Activated naive CD4-positive, alpha-beta T cell treated with anti-CD3 and anti-CD28 coated beads for 36 hours (primary cell): ENCODE measurements at regions of chr11 and their contacts with region 1.

Region 1: GRCh38 chr11:104918113-104918824 is 20.0 kb upstream of the CASP12 start:
- DNase-seq: no peak
- H3K4me3 Mint-ChIP-seq: peak overlapping the region; percentile 59
- H3K27ac Mint-ChIP-seq: peak overlapping the region; percentile 78
- H3K4me1 Mint-ChIP-seq: peaks cover 38% of the 10 kb centered on the region
- H3K27me3 Mint-ChIP-seq: no peaks in the 10 kb centered on the region

Region 2: DNA sequence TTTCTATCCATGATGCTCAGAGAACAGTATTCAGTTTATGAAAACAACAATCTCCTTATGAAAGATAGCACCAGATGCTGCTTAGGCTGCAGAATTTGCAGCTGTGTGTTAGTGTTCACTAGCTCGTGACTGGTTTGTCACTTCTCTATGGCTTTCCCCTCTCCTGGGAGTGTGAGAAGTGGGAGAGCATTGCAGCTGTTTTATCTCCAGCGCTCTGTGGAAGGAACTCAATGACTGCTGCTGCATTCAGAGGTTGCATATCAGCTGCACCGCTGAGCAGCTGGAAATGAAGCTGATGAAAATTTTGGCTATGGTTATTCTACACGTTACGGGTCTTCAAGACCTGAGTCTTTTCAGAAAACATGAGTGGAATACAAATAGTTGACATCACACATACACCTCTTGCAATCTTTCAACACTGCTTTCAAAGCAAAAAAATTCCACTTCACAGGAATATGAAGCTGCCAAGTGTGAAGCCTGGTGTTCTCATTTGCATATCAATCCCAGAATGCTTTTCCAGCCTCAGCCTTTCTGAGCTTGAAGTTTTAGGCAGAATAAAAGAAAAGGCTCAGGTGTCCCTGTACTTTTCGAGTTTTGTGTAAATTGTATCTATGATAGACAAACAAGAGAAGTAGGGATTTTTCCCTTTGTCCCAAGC is 1031.1 kb before region 1 on chr11:
- CTCF ChIA-PET with region 1: no interaction called
- intact Hi-C with region 1: no loop called
- DNase-seq: no peak
- H3K4me3 Mint-ChIP-seq: no peak overlapping the region
- H3K27ac Mint-ChIP-seq: no peak overlapping the region
- H3K4me1 Mint-ChIP-seq: no peaks in the 10 kb centered on the region
- H3K27me3 Mint-ChIP-seq: no peaks in the 10 kb centered on the region

Region 3: DNA sequence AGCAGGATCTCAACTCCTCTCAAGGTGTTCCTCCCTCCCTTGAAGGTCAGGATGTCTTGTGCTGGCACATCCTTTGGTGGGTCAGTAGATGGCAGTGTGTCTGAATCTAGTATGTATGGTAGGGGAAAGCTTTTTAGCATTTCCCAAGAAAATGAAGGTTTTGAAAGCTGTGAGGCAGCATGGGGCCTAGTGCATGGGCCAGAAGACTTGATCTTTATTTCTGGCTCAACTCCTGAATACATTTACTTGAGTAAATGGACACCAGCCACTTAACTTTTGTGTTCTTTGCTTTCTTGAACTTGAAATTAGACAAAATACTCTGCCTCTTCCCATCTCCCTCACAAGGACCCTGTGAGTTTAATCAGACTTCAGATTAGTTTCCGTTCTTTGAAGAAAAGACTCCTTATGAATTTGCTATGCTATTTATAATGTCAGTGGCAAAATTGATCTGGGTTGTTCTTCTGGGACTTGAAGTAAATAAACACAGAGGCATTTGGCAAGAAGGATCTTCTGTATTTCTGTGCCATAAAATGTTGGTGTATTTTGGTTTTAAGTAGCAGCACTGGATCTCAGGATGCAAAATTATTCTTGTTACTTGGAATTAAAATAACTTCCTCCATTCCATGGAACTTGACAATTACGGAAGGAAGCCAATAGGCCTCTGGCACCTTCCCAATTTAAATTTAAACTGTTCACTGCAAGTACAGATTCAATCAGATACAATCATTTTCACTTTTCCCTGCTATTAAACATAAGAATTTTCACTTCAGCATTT is 308.8 kb before region 1 on chr11:
- CTCF ChIA-PET with region 1: no interaction called
- intact Hi-C with region 1: loop called (anchors 2 kb)
- DNase-seq: peak; percentile 35
- H3K4me3 Mint-ChIP-seq: no peak overlapping the region
- H3K27ac Mint-ChIP-seq: no peak overlapping the region
- H3K4me1 Mint-ChIP-seq: peaks cover 13% of the 10 kb centered on the region
- H3K27me3 Mint-ChIP-seq: no peaks in the 10 kb centered on the region

Region 4: DNA sequence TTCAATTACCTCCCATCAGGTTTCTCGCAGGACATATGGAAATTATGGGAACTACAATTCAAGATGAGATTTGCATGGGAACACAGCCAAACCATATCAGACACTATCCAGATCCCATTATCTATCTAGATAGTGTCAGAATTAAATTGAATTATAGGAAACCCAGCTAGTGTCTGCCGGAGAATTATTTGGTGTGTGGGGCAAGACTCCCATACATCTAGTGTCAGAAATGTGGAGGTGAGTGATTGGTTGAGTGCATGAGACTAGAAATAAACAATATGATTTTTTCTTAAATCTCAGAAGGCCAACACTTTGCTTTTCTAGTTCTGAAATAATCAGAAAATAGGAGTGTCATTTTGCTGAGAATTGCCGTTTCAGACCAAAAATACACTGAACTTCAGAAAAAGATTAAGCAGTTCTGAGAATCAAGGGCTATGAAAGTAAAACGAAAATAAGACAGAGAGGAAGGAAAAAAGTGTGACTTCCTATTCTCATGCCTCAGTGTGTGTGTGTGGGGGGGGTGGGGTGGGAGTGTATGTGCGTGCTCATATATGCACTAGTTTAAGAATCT is 41.3 kb before region 1 on chr11:
- CTCF ChIA-PET with region 1: interaction called, 4 read pairs
- intact Hi-C with region 1: loop called (anchors 1 kb)
- DNase-seq: no peak
- H3K4me3 Mint-ChIP-seq: peak overlapping the region; percentile 22
- H3K27ac Mint-ChIP-seq: peak overlapping the region; percentile 59
- H3K4me1 Mint-ChIP-seq: peaks cover 32% of the 10 kb centered on the region
- H3K27me3 Mint-ChIP-seq: no peaks in the 10 kb centered on the region

Region 5: DNA sequence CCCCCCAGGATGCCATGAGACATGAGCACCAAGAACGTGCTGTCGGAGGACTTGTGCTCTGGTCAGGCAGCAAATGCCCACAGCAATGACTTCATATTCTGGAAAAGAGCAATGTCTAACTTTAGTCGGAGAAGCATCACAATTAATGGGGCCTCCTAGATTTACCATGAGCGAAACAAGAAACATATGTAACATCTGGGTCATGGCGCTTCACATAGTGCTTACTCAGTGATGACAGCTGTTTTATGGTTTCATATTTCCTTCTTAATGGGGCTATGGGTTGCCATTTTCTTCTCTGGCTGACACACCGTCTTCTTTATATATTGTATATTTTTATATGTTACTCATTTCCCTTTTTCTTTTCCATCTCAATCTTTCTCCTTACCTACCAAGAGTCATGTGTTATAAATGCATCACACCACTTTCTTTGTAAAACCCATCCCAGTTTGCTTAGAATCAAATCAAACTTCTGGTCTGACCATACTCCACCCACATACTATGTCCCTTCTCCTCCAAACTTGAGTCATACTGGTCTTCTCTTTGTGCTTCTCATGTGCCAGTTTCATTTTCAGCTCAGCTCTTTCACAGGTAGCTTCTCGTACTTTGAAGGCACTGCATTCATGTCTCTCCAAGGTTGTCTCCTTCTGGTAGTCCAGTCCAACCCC is 10.6 kb before region 1 on chr11:
- CTCF ChIA-PET with region 1: interaction called, 4 read pairs
- intact Hi-C with region 1: loop called (anchors 1 kb)
- DNase-seq: no peak
- H3K4me3 Mint-ChIP-seq: no peak overlapping the region
- H3K27ac Mint-ChIP-seq: no peak overlapping the region
- H3K4me1 Mint-ChIP-seq: peaks cover 17% of the 10 kb centered on the region
- H3K27me3 Mint-ChIP-seq: no peaks in the 10 kb centered on the region

Region 6: DNA sequence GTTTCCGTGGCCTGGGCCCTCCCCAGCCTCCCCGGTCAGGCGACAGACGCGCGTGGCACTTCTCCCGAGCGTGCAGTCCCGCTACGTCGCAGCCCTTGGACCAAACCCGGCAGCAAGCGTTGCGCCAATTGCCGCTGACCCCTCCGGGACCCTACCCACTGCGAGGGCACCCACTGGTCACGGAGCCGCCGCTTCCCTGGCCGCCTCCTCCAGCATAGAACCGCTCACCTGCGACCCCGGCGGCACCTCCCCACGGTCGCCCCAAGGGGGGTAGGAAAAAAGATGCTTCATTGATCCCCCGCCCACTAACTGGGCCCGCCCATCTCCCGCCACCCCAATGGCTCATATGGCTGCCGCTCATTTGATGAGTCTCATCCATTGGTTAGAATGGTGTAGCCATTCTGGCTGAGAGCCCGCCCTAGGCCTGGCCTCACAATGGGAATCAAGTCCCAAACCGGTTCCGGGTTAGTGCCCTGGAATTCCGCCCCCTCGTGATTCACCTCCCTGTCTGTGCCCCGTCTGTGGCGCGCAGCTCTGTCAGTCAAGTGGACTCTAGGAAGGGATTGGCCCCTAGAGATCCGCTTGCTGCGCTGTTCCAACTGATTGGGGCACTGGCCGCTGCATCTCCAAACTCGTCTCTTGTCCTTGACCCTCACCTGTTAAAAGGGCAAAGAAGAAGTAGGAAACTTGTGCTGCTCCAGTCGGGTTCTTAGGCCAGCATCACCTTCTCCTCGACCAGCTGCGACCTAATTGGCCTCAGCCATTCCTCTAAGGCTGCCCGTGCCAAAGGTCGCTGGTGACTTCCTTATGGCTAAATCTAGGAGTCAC is 1103.9 kb after region 1 on chr11 and contains the start of gene MSANTD4:
- CTCF ChIA-PET with region 1: no interaction called
- intact Hi-C with region 1: loop called (anchors 1 kb)
- DNase-seq: peak; percentile 99
- H3K4me3 Mint-ChIP-seq: peak within 1 kb of the TSS; percentile 93
- H3K27ac Mint-ChIP-seq: peak within 1 kb of the TSS; percentile 85
- H3K4me1 Mint-ChIP-seq: peaks cover 40% of the 10 kb centered on the region
- H3K27me3 Mint-ChIP-seq: peaks cover 3% of the 10 kb centered on the region
- total RNA-seq, gene MSANTD4: 11.5 to 12.0 TPM